Activated T-helper 1 cell treated with anti-CD3 and anti-CD28 coated beads, Interleukin-12 subunit alpha, Interleukin-12 subunit beta, Interleukin-2, Interleukin-4 antibody, amounts not matched to agents 30 ng/mL and 10 ng/mL and 1 ng/mL, durations not matched to agents 14 hours and 24 hours and 36 hours (primary cell): ENCODE measurements at regions of chr11 and their contacts with region 1.

Region 1: GRCh38 chr11:2930704-2931428 is 1.6 kb upstream of the PHLDA2 start:
- DNase-seq: no peak
- H3K4me3 Mint-ChIP-seq: peak overlapping the region; percentile 78
- H3K27ac Mint-ChIP-seq: peak overlapping the region; percentile 77
- H3K4me1 Mint-ChIP-seq: peaks cover 15% of the 10 kb centered on the region
- H3K27me3 Mint-ChIP-seq: peaks cover 12% of the 10 kb centered on the region

Region 2: GRCh38 chr11:2549876-2550620 is 380.8 kb before region 1 on chr11:
- intact Hi-C with region 1: no loop called
- DNase-seq: no peak
- H3K4me3 Mint-ChIP-seq: no peak overlapping the region
- H3K27ac Mint-ChIP-seq: no peak overlapping the region
- H3K4me1 Mint-ChIP-seq: no peaks in the 10 kb centered on the region
- H3K27me3 Mint-ChIP-seq: no peaks in the 10 kb centered on the region

Region 3: DNA sequence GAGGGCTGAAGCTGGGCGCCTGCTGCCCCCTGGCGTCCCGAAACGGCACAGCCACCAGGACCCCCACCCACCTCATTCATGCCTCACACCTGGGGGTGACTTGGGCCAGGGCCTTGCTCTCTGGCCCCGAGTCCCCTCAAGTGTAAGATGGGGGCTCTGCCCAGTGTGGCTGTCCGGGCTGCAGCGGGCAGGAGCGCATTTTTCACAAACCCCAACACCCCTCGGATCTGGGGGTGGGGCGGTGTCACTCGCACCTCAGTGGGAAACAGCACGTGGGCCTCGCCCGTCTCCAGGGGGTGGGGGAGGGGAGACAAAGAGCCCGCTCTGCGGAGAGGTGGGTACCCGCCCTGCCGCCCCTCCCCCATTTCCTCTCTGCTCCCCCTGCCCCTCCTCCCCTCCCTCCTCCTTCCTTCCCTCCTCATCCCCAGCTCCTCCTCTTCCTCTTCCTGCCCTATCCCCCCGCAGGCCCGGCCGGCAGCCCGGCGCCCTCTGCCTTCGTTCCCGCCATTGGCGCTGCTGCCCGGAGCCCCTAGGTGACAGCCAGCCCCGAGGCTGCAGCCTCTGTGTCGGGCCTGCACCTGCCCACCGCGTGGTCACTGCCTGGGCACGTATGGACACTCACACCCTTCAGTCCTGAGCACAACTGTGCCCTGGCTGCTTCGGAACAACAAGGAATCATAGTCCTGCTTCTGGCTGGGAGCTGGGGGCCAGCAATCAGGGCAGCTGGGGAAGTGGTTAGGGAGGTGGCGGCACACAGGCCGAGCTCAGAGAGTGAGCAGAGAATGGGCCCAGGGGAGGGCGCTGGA is 38.4 kb before region 1 on chr11:
- intact Hi-C with region 1: loop called (anchors 1 kb)
- DNase-seq: peak; percentile 54
- H3K4me3 Mint-ChIP-seq: peak overlapping the region; percentile 83
- H3K27ac Mint-ChIP-seq: peak overlapping the region; percentile 83
- H3K4me1 Mint-ChIP-seq: peaks cover 9% of the 10 kb centered on the region
- H3K27me3 Mint-ChIP-seq: peaks cover under 1% of the 10 kb centered on the region

Region 4: GRCh38 chr11:2901854-2902783 is 28.7 kb before region 1 on chr11:
- intact Hi-C with region 1: loop called (anchors 1 kb)
- DNase-seq: peak; percentile 93
- H3K4me3 Mint-ChIP-seq: peak overlapping the region; percentile 72
- H3K27ac Mint-ChIP-seq: no peak overlapping the region
- H3K4me1 Mint-ChIP-seq: peaks cover 41% of the 10 kb centered on the region
- H3K27me3 Mint-ChIP-seq: no peaks in the 10 kb centered on the region